A673 (cell line): ENCODE measurements at regions of chr17 and their contacts with region 1.

Region 1: GRCh38 chr17:58741121-58741625 is 14.5 kb upstream of the PPM1E start:
- DNase-seq: no peak
- H3K4me3 ChIP-seq: no peak overlapping the region
- H3K27ac ChIP-seq: no peak overlapping the region
- H3K4me1 ChIP-seq: no peaks in the 10 kb centered on the region
- H3K27me3 ChIP-seq: no peaks in the 10 kb centered on the region
- CTCF ChIP-seq: no peak

Region 2: DNA sequence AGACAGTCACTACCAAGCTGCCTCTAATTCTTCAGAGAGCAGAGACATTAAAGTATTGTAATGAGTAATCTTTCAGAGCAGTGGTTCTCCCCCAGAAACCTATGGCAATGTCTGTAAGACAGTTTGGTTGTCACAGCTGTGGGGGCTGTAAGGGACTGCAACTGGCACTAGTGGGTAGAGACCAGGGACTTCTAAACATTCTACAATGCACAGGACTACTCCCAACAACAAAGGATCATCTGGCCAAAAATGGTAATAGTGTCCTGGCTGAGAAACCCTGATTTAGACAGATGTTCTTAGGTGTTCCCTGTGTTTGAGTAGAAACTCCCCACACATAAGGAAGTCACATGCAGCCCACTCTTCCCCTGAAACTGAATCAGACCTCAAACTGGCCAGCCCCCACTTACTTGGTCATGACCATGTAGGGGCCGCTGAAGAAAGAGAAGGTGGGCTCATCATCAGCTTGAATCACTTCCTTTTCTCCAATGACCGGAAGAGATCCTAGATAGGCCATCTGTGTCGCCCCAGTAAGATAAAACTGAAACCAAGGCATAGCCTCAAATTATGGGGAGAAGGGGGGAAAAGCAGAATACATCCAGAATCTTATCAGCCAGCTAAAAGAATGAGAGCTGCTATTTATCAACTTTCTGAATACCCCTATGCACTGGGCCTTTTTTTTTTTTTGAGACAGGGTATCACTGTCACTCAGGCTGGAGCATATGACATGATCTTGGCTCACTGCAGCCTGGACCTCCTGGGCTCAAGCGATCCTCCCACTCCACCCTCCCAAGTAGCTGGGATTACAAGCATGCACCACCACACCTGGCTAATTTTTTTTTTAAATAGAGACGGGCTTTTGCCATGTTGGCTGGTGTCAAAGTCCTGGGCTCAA is 125.2 kb before region 1 on chr17:
- CTCF ChIA-PET with region 1: no interaction called
- POLR2A ChIA-PET with region 1: no interaction called
- intact Hi-C with region 1: no loop called
- DNase-seq: no peak
- H3K4me3 ChIP-seq: no peak overlapping the region
- H3K27ac ChIP-seq: no peak overlapping the region
- H3K4me1 ChIP-seq: no peaks in the 10 kb centered on the region
- H3K27me3 ChIP-seq: no peaks in the 10 kb centered on the region
- CTCF ChIP-seq: no peak

Region 3: DNA sequence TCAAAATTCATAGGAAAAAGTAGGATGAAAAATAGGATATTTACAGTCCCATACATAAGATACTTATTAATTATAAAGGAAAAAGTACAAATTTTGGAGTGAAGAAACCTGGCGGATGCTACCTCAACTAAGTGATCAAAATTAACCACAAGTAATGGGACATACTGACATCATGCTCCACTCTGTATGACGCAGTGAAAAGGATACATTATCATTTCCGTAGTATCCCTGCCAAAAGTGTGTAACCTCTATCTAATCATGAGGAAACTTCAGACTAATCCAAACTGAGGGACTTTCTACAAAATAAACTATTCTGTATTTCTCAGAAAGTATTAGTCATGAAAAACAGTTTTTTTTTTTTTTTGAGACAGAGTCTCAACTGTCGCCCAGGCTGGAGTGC is 305.0 kb after region 1 on chr17:
- CTCF ChIA-PET with region 1: no interaction called
- POLR2A ChIA-PET with region 1: interaction called, 15 read pairs
- intact Hi-C with region 1: no loop called
- DNase-seq: no peak
- H3K4me3 ChIP-seq: no peak overlapping the region
- H3K27ac ChIP-seq: no peak overlapping the region
- H3K4me1 ChIP-seq: no peaks in the 10 kb centered on the region
- H3K27me3 ChIP-seq: no peaks in the 10 kb centered on the region
- CTCF ChIP-seq: no peak